Activated naive CD4-positive, alpha-beta T cell treated with anti-CD3 and anti-CD28 coated beads for 36 hours (primary cell): ENCODE measurements at regions of chr3 and their contacts with region 1.

Region 1: DNA sequence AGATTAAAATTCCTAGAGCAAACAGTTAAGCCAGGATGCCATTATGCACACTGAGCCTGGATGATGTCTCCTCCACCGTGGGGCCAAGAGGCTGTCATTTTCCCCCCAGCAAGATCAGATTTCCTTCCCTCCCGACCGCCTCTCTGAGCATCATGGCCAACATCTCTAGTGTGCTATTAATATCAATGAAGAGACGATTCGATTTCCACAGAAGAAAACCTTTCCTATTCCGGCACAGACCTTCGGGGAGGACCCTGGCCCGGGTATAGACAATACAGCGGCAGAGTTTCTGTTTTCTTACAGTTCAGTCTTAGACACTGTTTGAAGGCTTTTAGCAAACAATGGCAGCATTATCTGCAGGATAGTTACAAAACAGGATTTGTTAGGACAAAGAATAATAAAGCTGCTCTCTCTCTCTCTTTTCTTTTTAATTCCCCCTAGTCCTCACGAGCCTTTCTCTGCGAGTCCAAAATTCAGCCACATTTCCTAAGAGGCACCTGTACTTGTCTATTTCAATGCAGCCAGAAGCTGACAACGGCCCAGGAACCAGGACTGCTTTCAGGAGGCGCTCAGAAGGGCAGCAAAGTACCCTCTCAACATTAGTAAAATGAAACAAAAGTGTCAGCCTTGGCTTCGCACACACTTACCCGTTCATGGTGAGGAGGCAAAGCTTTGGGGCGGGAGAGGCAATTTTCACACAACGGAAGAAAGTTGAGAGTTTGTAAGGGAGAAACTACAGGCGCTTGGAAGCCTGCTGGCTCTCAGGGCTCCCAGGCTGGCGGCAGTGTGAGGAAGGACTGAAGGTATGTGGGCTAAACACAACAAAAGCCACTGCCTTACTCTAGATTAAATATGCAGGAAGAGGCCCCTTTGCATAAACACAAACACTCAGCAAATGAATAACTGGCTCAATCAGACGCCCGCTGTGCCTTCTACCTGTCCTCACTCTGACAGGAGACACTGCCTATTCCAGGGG is 278.0 kb downstream of the FOXP1 start:
- DNase-seq: peak; percentile 44
- H3K4me3 Mint-ChIP-seq: peak overlapping the region; percentile 90
- H3K27ac Mint-ChIP-seq: peak overlapping the region; percentile 94
- H3K4me1 Mint-ChIP-seq: peaks cover 61% of the 10 kb centered on the region
- H3K27me3 Mint-ChIP-seq: no peaks in the 10 kb centered on the region

Region 2: DNA sequence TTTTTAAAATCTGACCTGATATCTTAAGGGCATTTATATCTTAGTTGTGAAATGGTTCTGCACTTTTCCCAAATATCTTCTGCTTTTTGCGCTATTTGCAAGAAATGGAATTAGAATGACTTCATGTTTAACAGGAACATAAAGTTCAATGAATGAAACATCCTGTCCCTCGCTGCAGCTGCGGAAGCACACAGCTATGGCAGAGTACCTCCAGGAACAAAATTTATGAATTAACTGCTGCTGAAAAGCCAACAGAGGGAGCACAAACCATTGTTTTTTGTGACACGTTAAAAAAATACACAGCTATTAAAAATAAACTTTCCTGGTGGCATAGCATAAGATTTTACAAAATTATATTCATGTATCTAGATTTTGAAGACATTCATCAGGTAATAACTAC is 588.7 kb before region 1 on chr3:
- CTCF ChIA-PET with region 1: no interaction called
- intact Hi-C with region 1: loop called (anchors 1 kb)
- DNase-seq: peak; percentile 24
- H3K4me3 Mint-ChIP-seq: no peak overlapping the region
- H3K27ac Mint-ChIP-seq: no peak overlapping the region
- H3K4me1 Mint-ChIP-seq: peaks cover 2% of the 10 kb centered on the region
- H3K27me3 Mint-ChIP-seq: peaks cover 4% of the 10 kb centered on the region

Region 3: DNA sequence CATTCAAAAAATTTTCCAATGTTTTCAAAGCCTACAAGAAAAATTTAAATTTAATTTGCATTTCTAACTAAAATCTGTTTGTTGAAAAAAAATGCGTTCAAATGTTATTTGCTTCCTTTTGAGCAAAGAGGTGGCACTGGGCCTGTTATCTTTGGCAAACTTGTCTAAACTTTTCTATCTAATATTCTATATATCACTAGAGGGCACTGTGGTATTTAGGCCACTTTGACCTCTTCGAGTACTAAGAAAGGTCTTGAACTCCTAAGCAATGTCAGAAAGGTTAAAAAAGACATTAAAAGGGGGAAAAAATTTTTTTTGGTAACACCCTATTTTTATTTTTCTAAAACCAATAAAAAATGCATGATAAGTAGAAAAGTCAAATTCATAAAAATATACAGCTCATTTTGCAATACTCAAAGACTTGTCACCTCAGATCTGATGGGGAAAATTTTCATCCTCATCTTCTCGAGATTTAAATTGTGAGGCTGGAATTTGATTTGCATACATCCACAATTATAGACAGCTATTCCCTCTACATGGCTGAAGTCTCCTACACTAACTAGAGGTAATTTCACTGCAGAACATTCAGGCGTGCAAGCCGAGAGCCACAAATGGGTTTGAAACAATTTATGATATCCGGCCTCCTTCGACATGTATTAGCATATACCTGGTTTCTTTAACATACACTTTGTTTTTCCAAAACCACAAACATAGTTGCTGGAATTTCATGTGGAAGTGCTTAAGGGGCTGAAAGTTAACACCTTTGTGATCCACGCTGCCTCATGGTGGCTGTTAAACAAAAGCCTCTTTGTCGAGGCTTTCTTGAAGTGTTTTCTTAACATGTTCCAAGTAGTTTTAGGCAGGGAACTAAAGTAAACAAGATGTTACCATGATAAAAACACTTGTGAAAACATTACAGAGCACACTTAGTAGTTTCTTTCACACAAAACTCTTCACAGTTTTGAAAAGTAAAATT is 298.4 kb before region 1 on chr3:
- CTCF ChIA-PET with region 1: interaction called, 5 read pairs
- intact Hi-C with region 1: loop called (anchors 1 kb)
- DNase-seq: no peak
- H3K4me3 Mint-ChIP-seq: no peak overlapping the region
- H3K27ac Mint-ChIP-seq: peak overlapping the region; percentile 71
- H3K4me1 Mint-ChIP-seq: peaks cover 77% of the 10 kb centered on the region
- H3K27me3 Mint-ChIP-seq: no peaks in the 10 kb centered on the region

Region 4: GRCh38 chr3:71130471-71131374 is 174.8 kb before region 1 on chr3:
- CTCF ChIA-PET with region 1: no interaction called
- intact Hi-C with region 1: loop called (anchors 1 kb)
- DNase-seq: peak; percentile 82
- H3K4me3 Mint-ChIP-seq: peak overlapping the region; percentile 88
- H3K27ac Mint-ChIP-seq: peak overlapping the region; percentile 96
- H3K4me1 Mint-ChIP-seq: peaks cover 66% of the 10 kb centered on the region
- H3K27me3 Mint-ChIP-seq: no peaks in the 10 kb centered on the region

Region 5: GRCh38 chr3:71264840-71265239 is 40.7 kb before region 1 on chr3:
- CTCF ChIA-PET with region 1: no interaction called
- intact Hi-C with region 1: loop called (anchors 2 kb)
- DNase-seq: peak; percentile 35
- H3K4me3 Mint-ChIP-seq: peak overlapping the region; percentile 20
- H3K27ac Mint-ChIP-seq: peak overlapping the region; percentile 28
- H3K4me1 Mint-ChIP-seq: peaks cover 65% of the 10 kb centered on the region
- H3K27me3 Mint-ChIP-seq: no peaks in the 10 kb centered on the region

Region 6: DNA sequence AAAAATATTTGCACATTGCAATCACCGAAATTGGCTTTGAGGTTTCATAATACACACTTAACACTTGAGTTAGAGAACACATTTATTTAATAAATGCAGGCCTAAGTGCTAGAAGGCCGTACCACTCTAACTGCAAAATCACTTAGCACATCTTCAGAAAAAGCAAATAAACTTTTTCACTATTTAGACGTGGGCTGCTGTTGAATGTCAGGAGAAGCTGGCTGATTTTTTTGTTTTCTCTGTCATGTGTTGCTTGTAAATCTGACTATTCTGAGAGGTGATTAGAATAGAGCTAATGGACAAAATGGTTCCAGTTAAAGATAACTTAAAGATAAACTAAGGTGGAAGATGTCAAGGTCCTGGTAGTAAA is 12.9 kb after region 1 on chr3:
- CTCF ChIA-PET with region 1: no interaction called
- intact Hi-C with region 1: no loop called
- DNase-seq: no peak
- H3K4me3 Mint-ChIP-seq: no peak overlapping the region
- H3K27ac Mint-ChIP-seq: no peak overlapping the region
- H3K4me1 Mint-ChIP-seq: peaks cover 46% of the 10 kb centered on the region
- H3K27me3 Mint-ChIP-seq: no peaks in the 10 kb centered on the region

Region 7: DNA sequence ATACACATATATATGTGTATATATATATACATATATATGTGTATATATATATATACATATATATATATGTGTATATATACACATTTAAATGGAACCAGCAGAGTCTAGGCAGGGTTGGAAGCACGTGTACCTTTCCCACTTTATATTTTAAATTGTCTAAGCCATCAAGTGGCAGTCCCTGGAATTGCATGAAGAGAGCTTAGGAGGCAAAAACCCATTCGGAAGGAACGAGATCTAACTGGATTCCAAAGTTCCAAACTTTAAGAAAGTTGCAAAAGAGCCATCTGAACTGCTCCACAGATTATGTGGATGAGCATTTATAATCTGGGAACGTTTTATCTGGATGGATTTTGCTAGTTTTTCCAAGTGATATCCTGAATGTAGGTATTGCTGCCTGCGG is 91.5 kb after region 1 on chr3:
- CTCF ChIA-PET with region 1: interaction called, 4 read pairs
- intact Hi-C with region 1: loop called (anchors 1 kb)
- DNase-seq: peak; percentile 35
- H3K4me3 Mint-ChIP-seq: peak overlapping the region; percentile 5
- H3K27ac Mint-ChIP-seq: no peak overlapping the region
- H3K4me1 Mint-ChIP-seq: peaks cover 81% of the 10 kb centered on the region
- H3K27me3 Mint-ChIP-seq: no peaks in the 10 kb centered on the region

Region 8: GRCh38 chr3:71583566-71584449 is 278.3 kb after region 1 on chr3 and contains the start of gene FOXP1:
- CTCF ChIA-PET with region 1: interaction called, 5 read pairs
- intact Hi-C with region 1: loop called (anchors 1 kb)
- DNase-seq: peak; percentile 63
- H3K4me3 Mint-ChIP-seq: peak within 1 kb of the TSS; percentile 95
- H3K27ac Mint-ChIP-seq: peak within 1 kb of the TSS; percentile 99
- H3K4me1 Mint-ChIP-seq: peaks cover 47% of the 10 kb centered on the region
- H3K27me3 Mint-ChIP-seq: no peaks in the 10 kb centered on the region
- total RNA-seq, gene FOXP1: 95.2 to 97.4 TPM